A549 (cell line): ENCODE measurements at regions of chr16 and their contacts with region 1.

Region 1: DNA sequence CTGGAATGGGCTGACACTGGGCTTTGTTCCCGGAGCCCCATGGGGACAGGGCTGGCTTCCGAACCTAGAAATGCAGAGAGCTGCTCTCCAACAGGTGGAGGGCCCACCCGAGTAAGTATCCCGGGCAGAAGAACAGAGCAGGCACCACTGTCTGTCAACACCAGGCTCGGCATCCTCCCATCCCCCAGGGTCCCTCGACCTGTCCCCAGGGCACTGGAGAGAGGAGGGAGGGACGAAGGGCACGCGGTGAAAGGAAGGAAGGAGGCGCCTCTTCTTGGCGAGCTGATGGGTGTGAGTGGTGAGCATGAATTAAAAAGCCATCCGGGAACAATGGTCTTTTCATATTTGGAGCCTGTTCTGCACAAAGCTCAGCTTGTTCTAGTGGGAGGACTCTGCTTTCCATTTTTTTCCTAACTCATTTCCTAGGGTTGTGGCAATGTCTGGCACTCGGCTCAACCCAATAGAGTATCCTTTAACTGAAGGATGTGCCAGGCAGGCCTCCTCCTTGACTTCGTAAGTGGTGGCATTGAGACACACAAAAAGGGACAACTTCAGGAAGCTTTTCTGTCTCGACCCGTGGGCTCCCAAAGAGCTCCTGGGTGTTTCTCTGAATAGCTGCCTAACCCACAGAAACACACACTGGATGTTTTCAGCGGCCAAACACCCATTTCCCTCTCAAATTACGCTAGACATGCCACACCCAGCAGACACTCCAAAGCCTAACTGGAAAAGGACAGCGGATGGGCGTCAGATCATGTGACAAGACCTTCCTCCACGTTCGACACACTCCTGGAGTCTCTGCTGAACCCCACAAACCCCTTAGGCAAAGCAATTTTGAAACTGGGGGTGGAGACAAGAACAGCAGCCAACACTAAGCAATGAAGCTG is 47.7 kb downstream of the ZFHX3 start:
- DNase-seq: no peak
- ATAC-seq: no peak
- H3K4me3 ChIP-seq: no peak overlapping the region
- H3K27ac ChIP-seq: no peak overlapping the region; a peak in 1 of 6 replicates
- H3K4me1 ChIP-seq: peaks cover 26% of the 10 kb centered on the region
- CTCF ChIP-seq: no peak
- EP300 ChIP-seq: no peak
- POLR2A ChIP-seq: no peak
- RAD21 ChIP-seq: no peak

Region 2: DNA sequence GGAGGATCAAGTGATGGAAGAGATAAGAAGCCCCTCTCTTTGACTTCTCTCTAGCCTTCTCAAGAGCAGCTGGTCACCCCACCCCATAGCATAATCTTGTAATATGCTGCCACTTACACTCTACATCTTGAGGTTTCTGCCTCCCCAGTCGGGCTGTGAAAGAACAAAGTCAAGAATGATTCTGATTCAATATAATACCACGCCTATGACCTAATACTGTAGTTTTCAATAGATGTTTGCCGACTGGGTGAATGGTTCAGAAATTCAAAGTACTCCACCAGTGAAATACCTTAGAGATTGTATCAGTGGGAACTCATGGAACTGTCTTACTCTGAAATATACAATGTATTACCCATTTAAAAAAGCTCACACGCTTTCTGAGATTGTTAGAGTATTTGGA is 140.7 kb after region 1 on chr16:
- CTCF ChIA-PET with region 1: no interaction called
- POLR2A ChIA-PET with region 1: interaction called, 11 read pairs
- DNase-seq: peak in 1 of 2 experiments; percentile 14
- ATAC-seq: no peak; a peak in 1 of 6 replicates
- H3K4me3 ChIP-seq: no peak overlapping the region
- H3K27ac ChIP-seq: no peak overlapping the region
- H3K4me1 ChIP-seq: no peaks in the 10 kb centered on the region; the same call in 2 of the 3 replicates
- CTCF ChIP-seq: no peak
- EP300 ChIP-seq: no peak
- POLR2A ChIP-seq: no peak
- RAD21 ChIP-seq: no peak